CD4-positive, alpha-beta T cell (primary cell): ENCODE measurements at regions of chr15 and their contacts with region 1.

Region 1: DNA sequence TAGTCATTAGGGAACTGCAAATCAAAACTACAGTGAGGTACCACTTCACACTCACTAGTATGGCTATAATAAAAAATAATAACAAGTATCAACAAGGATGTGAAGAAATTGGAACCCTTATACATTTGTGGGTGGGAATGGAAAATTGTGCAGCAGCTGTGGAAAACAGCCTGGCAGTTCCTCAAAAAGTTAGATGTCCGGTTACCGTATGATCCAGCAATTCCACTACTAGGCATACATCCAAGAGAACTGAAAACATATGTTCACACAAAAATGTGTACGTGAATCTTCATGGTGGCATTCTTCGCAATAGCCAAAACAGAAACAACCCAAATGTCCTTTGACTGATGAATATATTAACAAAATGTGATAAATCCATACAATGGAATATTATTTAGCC is 187.9 kb upstream of the LYSMD4 start:
- DNase-seq: no peak
- ATAC-seq: no peak
- H3K4me3 ChIP-seq: no peak overlapping the region
- H3K4me3 Mint-ChIP-seq: no peak overlapping the region
- H3K27ac ChIP-seq: no peak overlapping the region
- H3K27ac Mint-ChIP-seq: no peak overlapping the region
- H3K4me1 ChIP-seq: peaks cover 7% of the 10 kb centered on the region
- H3K4me1 Mint-ChIP-seq: peaks cover 8% of the 10 kb centered on the region
- H3K27me3 ChIP-seq: peaks cover 15 to 16% of the 10 kb centered on the region in 2 experiments
- H3K27me3 Mint-ChIP-seq: peaks cover 46% of the 10 kb centered on the region
- CTCF ChIP-seq: no peak

Region 2: GRCh38 chr15:98856218-98856907 is 1064.7 kb before region 1 on chr15:
- CTCF ChIA-PET with region 1: no interaction called
- POLR2A ChIA-PET with region 1: no interaction called
- intact Hi-C with region 1: loop called in 1 of 2 experiments (anchors 5 kb)
- DNase-seq: no peak
- ATAC-seq: no peak
- H3K4me3 ChIP-seq: no peak overlapping the region
- H3K4me3 Mint-ChIP-seq: no peak overlapping the region
- H3K27ac ChIP-seq: no peak overlapping the region
- H3K27ac Mint-ChIP-seq: peak overlapping the region; percentile 35
- H3K4me1 ChIP-seq: peaks cover 37% of the 10 kb centered on the region
- H3K4me1 Mint-ChIP-seq: peaks cover 86% of the 10 kb centered on the region
- H3K27me3 ChIP-seq: no peaks in the 10 kb centered on the region
- H3K27me3 Mint-ChIP-seq: no peaks in the 10 kb centered on the region
- CTCF ChIP-seq: no peak

Region 3: GRCh38 chr15:99250494-99251435 is 670.3 kb before region 1 on chr15:
- CTCF ChIA-PET with region 1: no interaction called
- POLR2A ChIA-PET with region 1: no interaction called
- intact Hi-C with region 1: loop called in 1 of 2 experiments (anchors 5 kb)
- DNase-seq: peak; percentile 85 to 98 (median 90)
- ATAC-seq: peak; percentile 98
- H3K4me3 ChIP-seq: peak overlapping the region; percentile 75
- H3K4me3 Mint-ChIP-seq: peak overlapping the region; percentile 86
- H3K27ac ChIP-seq: peak overlapping the region; percentile 32 to 53
- H3K27ac Mint-ChIP-seq: peak overlapping the region; percentile 81
- H3K4me1 ChIP-seq: peaks cover 22% of the 10 kb centered on the region
- H3K4me1 Mint-ChIP-seq: peaks cover 24% of the 10 kb centered on the region
- H3K27me3 ChIP-seq: no peaks in the 10 kb centered on the region
- H3K27me3 Mint-ChIP-seq: no peaks in the 10 kb centered on the region
- CTCF ChIP-seq: no peak

Region 4: DNA sequence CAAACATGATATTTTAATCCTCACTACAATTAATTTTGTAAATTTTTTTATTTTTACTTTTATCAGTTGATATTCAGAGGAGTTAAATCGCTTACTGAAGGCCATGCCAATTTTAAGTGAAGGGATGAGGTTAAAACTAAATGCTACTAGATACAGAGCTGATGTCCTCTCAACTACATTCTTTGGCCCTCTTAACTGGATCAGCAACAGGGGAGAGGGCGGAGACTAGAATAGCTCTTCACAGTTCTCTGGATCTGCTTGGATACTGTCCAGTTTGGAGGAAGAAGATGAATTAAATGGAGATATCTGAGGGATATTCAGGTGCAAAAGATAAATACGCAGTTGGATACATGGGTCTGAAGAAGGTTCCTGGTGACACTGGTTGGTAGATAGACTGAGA is 102.2 kb before region 1 on chr15:
- CTCF ChIA-PET with region 1: no interaction called
- POLR2A ChIA-PET with region 1: no interaction called
- intact Hi-C with region 1: loop called in 1 of 2 experiments (anchors 5 kb)
- DNase-seq: no peak
- ATAC-seq: no peak
- H3K4me3 ChIP-seq: no peak overlapping the region
- H3K4me3 Mint-ChIP-seq: no peak overlapping the region
- H3K27ac ChIP-seq: no peak overlapping the region
- H3K27ac Mint-ChIP-seq: no peak overlapping the region
- H3K4me1 ChIP-seq: no peaks in the 10 kb centered on the region
- H3K4me1 Mint-ChIP-seq: no peaks in the 10 kb centered on the region
- H3K27me3 ChIP-seq: no peaks in the 10 kb centered on the region
- H3K27me3 Mint-ChIP-seq: no peaks in the 10 kb centered on the region
- CTCF ChIP-seq: no peak

Region 5: DNA sequence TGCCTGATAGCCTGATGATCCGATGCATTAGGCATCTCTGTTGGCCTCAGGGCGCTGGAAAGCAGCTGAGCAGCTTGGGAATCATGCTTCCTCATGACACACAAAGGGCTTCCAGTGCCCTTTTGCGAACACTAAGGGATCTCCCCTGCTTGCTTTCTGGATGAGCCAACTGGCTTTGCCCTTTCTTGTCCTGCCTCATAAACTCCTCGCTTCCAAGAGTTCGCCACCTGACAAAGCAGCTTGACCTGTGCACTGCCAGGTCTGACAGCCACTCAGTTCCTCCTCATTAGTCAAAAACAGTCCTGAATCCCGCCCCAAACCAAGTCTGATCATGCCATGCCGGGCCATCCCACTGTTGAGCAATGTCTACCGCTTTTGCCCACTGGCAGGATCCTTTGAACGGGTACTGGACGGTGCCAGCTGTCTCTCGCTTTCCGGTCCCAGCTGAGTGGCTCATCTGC is 77.6 kb after region 1 on chr15:
- CTCF ChIA-PET with region 1: no interaction called
- POLR2A ChIA-PET with region 1: no interaction called
- intact Hi-C with region 1: no loop called
- DNase-seq: no peak
- ATAC-seq: no peak
- H3K4me3 ChIP-seq: no peak overlapping the region
- H3K4me3 Mint-ChIP-seq: no peak overlapping the region
- H3K27ac ChIP-seq: no peak overlapping the region
- H3K27ac Mint-ChIP-seq: no peak overlapping the region
- H3K4me1 ChIP-seq: no peaks in the 10 kb centered on the region
- H3K4me1 Mint-ChIP-seq: no peaks in the 10 kb centered on the region
- H3K27me3 ChIP-seq: no peaks in the 10 kb centered on the region
- H3K27me3 Mint-ChIP-seq: no peaks in the 10 kb centered on the region
- CTCF ChIP-seq: no peak

Region 6: GRCh38 chr15:101469520-101470288 is 1548.6 kb after region 1 on chr15:
- CTCF ChIA-PET with region 1: no interaction called
- POLR2A ChIA-PET with region 1: no interaction called
- intact Hi-C with region 1: no loop called
- DNase-seq: no peak
- ATAC-seq: no peak
- H3K4me3 ChIP-seq: no peak overlapping the region
- H3K4me3 Mint-ChIP-seq: no peak overlapping the region
- H3K27ac ChIP-seq: no peak overlapping the region
- H3K27ac Mint-ChIP-seq: no peak overlapping the region
- H3K4me1 ChIP-seq: no peaks in the 10 kb centered on the region
- H3K4me1 Mint-ChIP-seq: no peaks in the 10 kb centered on the region
- H3K27me3 ChIP-seq: peaks cover 4 to 9% of the 10 kb centered on the region in 2 experiments
- H3K27me3 Mint-ChIP-seq: peaks cover 44% of the 10 kb centered on the region
- CTCF ChIP-seq: no peak